CD8-positive, alpha-beta memory T cell (primary cell): ENCODE measurements at regions of chr2 and their contacts with region 1.

Region 1: GRCh38 chr2:177263451-177264208 is 897 bp downstream of the NFE2L2 start:
- DNase-seq: peak; percentile 93 to 96 (median 94)
- H3K4me3 ChIP-seq: peak overlapping the region; percentile 85
- H3K4me3 Mint-ChIP-seq: peak overlapping the region; percentile 89 to 99 (median 95)
- H3K27ac ChIP-seq: peak overlapping the region; percentile 99
- H3K27ac Mint-ChIP-seq: peak overlapping the region; percentile 95 to 100 (median 99)
- H3K4me1 ChIP-seq: peaks cover 47% of the 10 kb centered on the region
- H3K4me1 Mint-ChIP-seq: peaks cover 49 to 64% (median 57%) of the 10 kb centered on the region in 3 donors
- H3K27me3 ChIP-seq: no peaks in the 10 kb centered on the region
- H3K27me3 Mint-ChIP-seq: peaks cover 0 to 1% of the 10 kb centered on the region in 2 donors

Region 2: GRCh38 chr2:176729706-176730569 is 533.7 kb before region 1 on chr2:
- CTCF ChIA-PET with region 1: no interaction called
- POLR2A ChIA-PET with region 1: no interaction called
- DNase-seq: no peak
- H3K4me3 ChIP-seq: no peak overlapping the region
- H3K4me3 Mint-ChIP-seq: no peak overlapping the region
- H3K27ac ChIP-seq: no peak overlapping the region
- H3K27ac Mint-ChIP-seq: no peak overlapping the region
- H3K4me1 ChIP-seq: no peaks in the 10 kb centered on the region
- H3K4me1 Mint-ChIP-seq: no peaks in the 10 kb centered on the region
- H3K27me3 ChIP-seq: no peaks in the 10 kb centered on the region
- H3K27me3 Mint-ChIP-seq: peaks cover 6 to 13% of the 10 kb centered on the region in 2 donors

Region 3: DNA sequence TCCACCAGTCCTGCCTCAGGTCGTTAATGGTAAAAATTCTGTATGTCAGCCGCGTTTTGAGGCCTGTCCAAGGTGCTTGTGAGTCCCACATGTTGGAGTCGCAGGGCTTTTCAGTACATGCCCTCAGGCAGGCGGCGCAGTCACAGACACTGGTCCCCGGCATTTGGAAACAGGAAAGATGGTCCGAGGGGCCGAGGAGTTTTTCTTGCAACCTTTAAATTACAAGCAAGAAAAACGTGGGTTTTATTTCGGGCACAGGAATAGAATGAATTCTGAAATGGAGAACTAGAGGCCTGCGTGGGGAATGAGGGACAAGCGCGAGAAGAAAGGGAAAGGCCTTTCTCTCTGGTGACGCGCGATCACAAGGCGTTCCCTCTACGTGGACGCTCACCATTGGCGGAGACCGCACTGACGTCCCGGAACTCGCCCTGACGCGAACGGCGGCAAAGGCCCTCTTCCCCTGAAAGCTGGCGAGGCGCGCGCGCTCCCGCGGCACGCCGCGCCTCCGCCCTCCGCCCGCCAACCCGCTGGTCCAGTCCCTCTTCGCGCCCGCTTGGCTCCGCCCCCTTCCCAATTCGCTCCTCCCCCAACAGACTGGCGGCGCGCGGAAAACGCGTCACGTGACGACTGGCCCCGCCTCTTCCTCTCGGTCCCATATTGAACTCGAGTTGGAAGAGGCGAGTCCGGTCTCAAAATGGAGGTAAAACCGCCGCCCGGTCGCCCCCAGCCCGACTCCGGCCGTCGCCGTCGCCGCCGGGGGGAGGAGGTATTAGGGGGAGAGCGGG is 51.3 kb before region 1 on chr2 and contains the start of gene HNRNPA3:
- CTCF ChIA-PET with region 1: interaction called, 37 read pairs
- POLR2A ChIA-PET with region 1: interaction called, 145 read pairs
- DNase-seq: peak; percentile 99 to 100 (median 100)
- H3K4me3 ChIP-seq: peak within 1 kb of the TSS; percentile 98
- H3K4me3 Mint-ChIP-seq: peak within 1 kb of the TSS; percentile 91 to 99 (median 93)
- H3K27ac ChIP-seq: peak within 1 kb of the TSS; percentile 100
- H3K27ac Mint-ChIP-seq: peak within 1 kb of the TSS; percentile 99 to 100 (median 100)
- H3K4me1 ChIP-seq: peaks cover 51% of the 10 kb centered on the region
- H3K4me1 Mint-ChIP-seq: peaks cover 49 to 58% (median 57%) of the 10 kb centered on the region in 3 donors
- H3K27me3 ChIP-seq: no peaks in the 10 kb centered on the region
- H3K27me3 Mint-ChIP-seq: peaks cover 0 to 10% of the 10 kb centered on the region in 2 donors
- total RNA-seq, gene HNRNPA3: 203 to 216 TPM

Region 4: GRCh38 chr2:177239932-177240630 is 23.5 kb before region 1 on chr2:
- CTCF ChIA-PET with region 1: interaction called, 55 read pairs
- POLR2A ChIA-PET with region 1: interaction called, 31 read pairs
- DNase-seq: peak in 3 of 5 donors; percentile 8 to 54 (median 30)
- H3K4me3 ChIP-seq: peak overlapping the region; percentile 2
- H3K4me3 Mint-ChIP-seq: peak overlapping the region; percentile 2 to 66 (median 57)
- H3K27ac ChIP-seq: no peak overlapping the region
- H3K27ac Mint-ChIP-seq: peak overlapping the region; percentile 74 to 99 (median 90)
- H3K4me1 ChIP-seq: peaks cover 67% of the 10 kb centered on the region
- H3K4me1 Mint-ChIP-seq: peaks cover 71 to 94% (median 82%) of the 10 kb centered on the region in 3 donors
- H3K27me3 ChIP-seq: no peaks in the 10 kb centered on the region
- H3K27me3 Mint-ChIP-seq: peaks cover 0 to 1% of the 10 kb centered on the region in 2 donors

Region 5: GRCh38 chr2:177296040-177296439 is 32.4 kb after region 1 on chr2:
- CTCF ChIA-PET with region 1: interaction called, 37 read pairs
- POLR2A ChIA-PET with region 1: interaction called, 10 read pairs
- DNase-seq: peak in 2 of 5 donors; percentile 21 to 33
- H3K4me3 ChIP-seq: no peak overlapping the region
- H3K4me3 Mint-ChIP-seq: no peak overlapping the region
- H3K27ac ChIP-seq: no peak overlapping the region
- H3K27ac Mint-ChIP-seq: no peak overlapping the region
- H3K4me1 ChIP-seq: no peaks in the 10 kb centered on the region
- H3K4me1 Mint-ChIP-seq: peaks cover 3 to 7% (median 5%) of the 10 kb centered on the region in 3 donors
- H3K27me3 ChIP-seq: no peaks in the 10 kb centered on the region
- H3K27me3 Mint-ChIP-seq: peaks cover 0 to 5% of the 10 kb centered on the region in 2 donors

Region 6: DNA sequence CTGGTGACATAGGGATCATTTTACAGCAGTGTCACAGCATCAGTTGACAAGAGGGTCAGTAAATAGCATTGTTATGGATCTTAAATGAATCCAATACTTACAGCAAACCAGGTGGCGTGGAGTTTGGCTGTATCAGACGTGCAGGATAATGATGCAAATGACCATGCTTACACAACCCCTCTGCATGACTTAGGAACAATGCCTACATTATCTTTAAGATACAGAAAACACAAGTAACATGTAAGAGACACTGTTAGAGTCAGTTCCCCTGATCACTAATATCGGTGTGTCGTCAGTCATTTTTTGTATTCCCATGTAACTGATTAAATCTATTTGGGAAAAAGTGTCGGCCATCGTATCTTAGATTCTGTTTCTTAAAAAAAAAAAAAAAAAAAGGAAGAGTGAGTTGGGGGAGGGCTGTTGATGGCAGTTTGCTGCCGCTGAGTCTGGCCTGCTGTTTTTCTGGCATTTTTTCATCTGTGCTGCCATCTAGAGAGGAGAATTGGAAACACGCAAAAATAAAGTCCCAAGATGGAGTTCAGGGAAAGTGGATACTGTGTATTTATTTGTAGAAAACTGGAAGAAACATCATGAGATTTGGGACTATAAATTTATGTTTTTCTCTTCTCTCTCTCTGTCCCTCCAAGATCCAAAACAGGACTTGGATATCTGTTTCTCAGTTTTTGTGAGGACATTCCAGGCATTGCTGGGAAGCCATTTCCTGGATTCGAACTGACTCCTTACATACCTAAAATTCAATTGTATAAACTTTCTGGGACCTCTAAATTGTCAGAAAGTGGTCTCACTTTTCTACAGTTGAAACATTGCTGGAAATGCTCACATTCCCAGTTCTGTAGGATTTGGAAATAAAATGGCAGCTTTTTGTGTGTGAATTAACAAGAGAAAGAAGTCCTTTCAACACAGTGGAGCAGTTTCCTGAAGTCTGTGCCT is 68.7 kb after region 1 on chr2:
- CTCF ChIA-PET with region 1: interaction called, 21 read pairs
- POLR2A ChIA-PET with region 1: interaction called, 5 read pairs
- DNase-seq: peak in 3 of 5 donors; percentile 1 to 63 (median 37)
- H3K4me3 ChIP-seq: no peak overlapping the region
- H3K4me3 Mint-ChIP-seq: peak overlapping the region in 1 of 7 donors; percentile 23
- H3K27ac ChIP-seq: no peak overlapping the region
- H3K27ac Mint-ChIP-seq: no peak overlapping the region
- H3K4me1 ChIP-seq: peaks cover 23% of the 10 kb centered on the region
- H3K4me1 Mint-ChIP-seq: peaks cover 3 to 5% (median 4%) of the 10 kb centered on the region in 3 donors
- H3K27me3 ChIP-seq: no peaks in the 10 kb centered on the region
- H3K27me3 Mint-ChIP-seq: no peaks in the 10 kb centered on the region

Region 7: DNA sequence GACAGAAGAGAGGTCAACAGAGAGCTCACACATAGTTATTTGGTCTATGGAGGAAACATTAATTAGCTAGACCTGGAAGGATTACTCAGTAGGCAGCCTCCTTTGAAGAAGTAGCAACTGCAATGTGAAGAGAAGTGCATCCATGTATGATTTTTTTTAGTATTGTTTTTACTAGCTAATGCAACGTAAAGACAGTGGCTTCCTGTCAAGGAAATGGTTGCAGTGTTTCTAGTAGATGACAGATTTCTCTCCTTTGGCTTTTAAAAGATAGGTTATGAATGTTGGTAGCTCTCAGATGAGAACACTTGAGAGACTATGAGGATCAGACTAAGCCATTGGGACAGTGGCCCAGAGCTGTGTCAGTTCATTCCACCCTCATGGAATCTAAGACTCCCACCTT is 304.8 kb after region 1 on chr2:
- CTCF ChIA-PET with region 1: no interaction called
- POLR2A ChIA-PET with region 1: no interaction called
- DNase-seq: no peak
- H3K4me3 ChIP-seq: no peak overlapping the region
- H3K4me3 Mint-ChIP-seq: no peak overlapping the region
- H3K27ac ChIP-seq: no peak overlapping the region
- H3K27ac Mint-ChIP-seq: no peak overlapping the region
- H3K4me1 ChIP-seq: no peaks in the 10 kb centered on the region
- H3K4me1 Mint-ChIP-seq: no peaks in the 10 kb centered on the region
- H3K27me3 ChIP-seq: no peaks in the 10 kb centered on the region
- H3K27me3 Mint-ChIP-seq: peaks cover 5 to 7% of the 10 kb centered on the region in 2 donors